Spleen (tissue), 13 donors: ENCODE measurements at regions of chr12 and their contacts with region 1.

Region 1: GRCh38 chr12:39692258-39692853 is 72.8 kb upstream of the ABCD2 start:
- DNase-seq: no peak
- H3K4me3 ChIP-seq: no peak overlapping the region
- H3K27ac ChIP-seq: no peak overlapping the region
- H3K4me1 ChIP-seq: no peaks in the 10 kb centered on the region
- H3K27me3 ChIP-seq: no peaks in the 10 kb centered on the region
- CTCF ChIP-seq: peak in 6 of 11 experiments; percentile 13 to 37 (median 21)
- POLR2A ChIP-seq: no peak

Region 2: GRCh38 chr12:39329018-39329417 is 363.3 kb before region 1 on chr12:
- intact Hi-C with region 1: loop called (anchors 5 kb)
- DNase-seq: no peak
- H3K4me3 ChIP-seq: no peak overlapping the region
- H3K27ac ChIP-seq: no peak overlapping the region
- H3K4me1 ChIP-seq: no peaks in the 10 kb centered on the region
- H3K27me3 ChIP-seq: no peaks in the 10 kb centered on the region
- CTCF ChIP-seq: no peak
- POLR2A ChIP-seq: no peak

Region 3: GRCh38 chr12:39490500-39491276 is 201.7 kb before region 1 on chr12:
- intact Hi-C with region 1: no loop called
- DNase-seq: no peak
- H3K4me3 ChIP-seq: no peak overlapping the region
- H3K27ac ChIP-seq: no peak overlapping the region
- H3K4me1 ChIP-seq: no peaks in the 10 kb centered on the region
- H3K27me3 ChIP-seq: no peaks in the 10 kb centered on the region
- CTCF ChIP-seq: no peak
- POLR2A ChIP-seq: no peak